ENCODE measurements at regions of chr1 and their contacts with region 1.

Region 1: GRCh38 chr1:184386312-184387068 is at the start of gene C1orf21:
- DNase-seq: peak; percentile 92 to 95
- ATAC-seq: peak; percentile 84 to 87 (median 86)
- H3K4me3 ChIP-seq: peak within 1 kb of the TSS; percentile 91
- H3K27ac ChIP-seq: peak within 1 kb of the TSS; percentile 96
- H3K4me1 ChIP-seq: peaks cover 29% of the 10 kb centered on the region
- H3K27me3 ChIP-seq: no peaks in the 10 kb centered on the region
- CTCF ChIP-seq: no peak
- total RNA-seq, gene C1orf21: 103 to 184 (median 149) TPM

Region 2: GRCh38 chr1:184270556-184270955 is 115.9 kb before region 1 on chr1:
- intact Hi-C with region 1: no loop called
- DNase-seq: no peak
- ATAC-seq: no peak
- H3K4me3 ChIP-seq: no peak overlapping the region
- H3K27ac ChIP-seq: no peak overlapping the region
- H3K4me1 ChIP-seq: no peaks in the 10 kb centered on the region
- H3K27me3 ChIP-seq: no peaks in the 10 kb centered on the region
- CTCF ChIP-seq: no peak

Region 3: DNA sequence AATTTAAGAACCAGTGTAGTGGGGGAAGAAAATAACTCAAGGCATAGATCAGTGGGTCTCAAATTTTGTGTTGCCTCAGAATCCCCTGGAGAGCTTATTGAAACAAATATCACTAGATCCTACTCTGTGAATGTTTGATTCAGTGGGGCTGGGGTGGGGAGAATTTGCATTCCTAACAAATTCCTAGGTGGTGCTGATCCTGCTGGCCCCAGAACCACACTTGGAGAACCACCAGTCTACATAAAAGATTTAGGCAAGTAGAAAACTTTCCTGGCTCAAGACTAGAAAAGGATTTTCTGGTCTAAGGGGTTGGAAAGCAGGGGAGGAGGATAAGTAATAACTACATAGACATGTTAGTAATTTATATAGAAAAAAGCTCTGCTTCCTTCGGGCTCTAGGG is 33.7 kb before region 1 on chr1:
- intact Hi-C with region 1: no loop called
- DNase-seq: no peak
- ATAC-seq: no peak
- H3K4me3 ChIP-seq: no peak overlapping the region
- H3K27ac ChIP-seq: no peak overlapping the region
- H3K4me1 ChIP-seq: peaks cover 25% of the 10 kb centered on the region
- H3K27me3 ChIP-seq: no peaks in the 10 kb centered on the region
- CTCF ChIP-seq: no peak

Region 4: DNA sequence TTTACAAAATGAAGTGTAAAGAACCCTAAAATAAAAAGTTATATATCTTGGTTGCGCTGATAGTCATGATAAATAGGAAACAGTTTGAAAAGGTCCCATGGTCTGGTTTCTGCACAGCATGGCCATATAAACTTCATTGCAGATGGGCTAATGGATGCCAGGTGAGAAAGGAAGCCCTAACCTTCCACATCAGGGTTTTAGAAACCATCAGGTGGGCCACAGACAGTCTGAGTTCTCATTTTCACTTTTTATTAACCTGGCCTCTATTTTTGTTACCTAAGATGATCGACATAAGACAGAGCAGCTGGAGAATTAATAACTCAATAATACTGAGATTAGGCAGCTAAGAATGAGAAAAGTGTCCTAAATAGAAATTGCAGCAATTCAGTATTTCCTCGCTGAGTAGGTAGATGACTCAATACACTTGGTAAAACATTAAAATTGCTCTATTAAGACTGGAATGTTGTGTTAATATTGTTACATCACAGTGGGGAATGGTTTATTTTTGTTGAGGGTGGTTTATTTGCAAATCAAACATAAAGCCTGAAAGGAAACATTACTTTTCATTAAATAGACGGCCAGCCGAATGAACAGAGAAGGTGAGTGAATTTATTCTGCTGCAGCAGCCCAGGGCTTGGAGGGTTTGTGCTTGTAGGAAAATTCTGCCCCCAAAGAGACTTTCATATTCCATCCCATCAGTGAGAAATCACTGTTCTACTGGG is 21.5 kb after region 1 on chr1:
- intact Hi-C with region 1: no loop called
- DNase-seq: no peak
- ATAC-seq: peak in 1 of 4 donors; percentile 16
- H3K4me3 ChIP-seq: no peak overlapping the region
- H3K27ac ChIP-seq: peak overlapping the region; percentile 43
- H3K4me1 ChIP-seq: peaks cover 72% of the 10 kb centered on the region
- H3K27me3 ChIP-seq: no peaks in the 10 kb centered on the region
- CTCF ChIP-seq: no peak

Region 5: DNA sequence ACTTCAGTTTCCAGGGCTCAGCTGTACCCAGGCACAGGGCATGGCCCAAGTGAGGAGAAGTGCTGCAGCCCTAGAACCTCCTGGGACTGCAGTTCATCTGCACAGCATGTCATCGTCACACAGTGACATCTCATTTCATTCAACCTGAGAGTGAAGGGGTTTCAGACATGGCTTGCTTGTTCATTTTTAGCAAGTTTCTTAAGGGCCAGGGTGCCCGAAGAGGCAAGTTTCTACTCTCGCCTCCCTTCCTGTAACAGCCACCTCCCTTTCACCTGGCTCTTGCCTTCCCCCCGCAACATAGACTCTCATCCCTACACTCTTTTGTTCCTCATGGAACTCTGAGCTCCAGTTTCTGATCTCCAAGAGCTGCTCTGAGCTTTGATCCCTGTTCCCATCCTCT is 108.4 kb after region 1 on chr1:
- intact Hi-C with region 1: loop called (anchors 5 kb)
- DNase-seq: no peak
- ATAC-seq: no peak
- H3K4me3 ChIP-seq: no peak overlapping the region
- H3K27ac ChIP-seq: peak overlapping the region; percentile 87
- H3K4me1 ChIP-seq: peaks cover 78% of the 10 kb centered on the region
- H3K27me3 ChIP-seq: no peaks in the 10 kb centered on the region
- CTCF ChIP-seq: no peak

Region 6: DNA sequence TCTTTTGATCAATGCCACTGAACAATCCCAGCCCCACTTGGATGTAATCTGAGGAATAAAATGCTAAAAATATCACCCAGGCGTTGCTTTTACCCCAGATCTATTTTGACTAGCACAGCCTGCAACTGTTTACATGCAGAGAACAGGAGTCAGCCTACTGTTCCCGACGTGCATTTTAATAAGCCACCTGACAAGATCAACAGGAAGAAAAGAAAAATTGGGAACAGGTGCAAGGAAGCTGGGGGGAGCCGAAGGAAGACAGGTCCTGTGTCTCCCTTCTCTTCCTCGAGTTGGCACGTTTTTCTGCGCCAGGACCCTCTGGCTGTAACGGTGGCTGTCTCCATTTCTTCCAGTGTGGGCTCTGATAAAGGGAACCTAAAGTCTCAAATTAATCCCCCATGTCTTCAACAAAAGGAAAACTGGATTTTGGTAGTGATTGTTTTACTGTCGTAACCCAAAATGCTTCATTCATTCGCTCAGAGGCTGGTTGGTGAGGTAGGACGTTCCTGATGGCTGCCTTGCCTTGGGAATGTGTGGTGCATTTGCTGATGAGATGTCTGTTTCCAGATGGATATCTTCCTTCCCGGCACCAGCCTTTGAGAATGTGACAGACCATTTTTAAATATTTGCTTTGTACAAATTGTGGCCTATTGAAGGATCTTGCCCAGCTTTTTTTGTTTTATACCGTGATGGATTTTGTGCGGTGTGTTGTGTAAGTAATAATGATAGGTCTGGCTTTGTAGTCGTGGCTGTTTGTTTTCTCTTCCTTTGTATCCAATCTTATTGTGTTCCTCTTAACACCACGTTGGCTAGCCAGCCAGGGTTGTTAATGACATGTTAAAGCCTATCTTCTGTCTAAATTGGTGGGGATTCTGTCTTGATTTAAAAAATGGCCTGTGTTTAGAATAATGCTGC is 117.8 kb after region 1 on chr1:
- intact Hi-C with region 1: loop called in 1 of 2 experiments (anchors 5 kb)
- DNase-seq: no peak
- ATAC-seq: peak; percentile 70 to 80 (median 75)
- H3K4me3 ChIP-seq: peak overlapping the region; percentile 58
- H3K27ac ChIP-seq: peak overlapping the region; percentile 88
- H3K4me1 ChIP-seq: peaks cover 75% of the 10 kb centered on the region
- H3K27me3 ChIP-seq: no peaks in the 10 kb centered on the region
- CTCF ChIP-seq: no peak

Region 7: DNA sequence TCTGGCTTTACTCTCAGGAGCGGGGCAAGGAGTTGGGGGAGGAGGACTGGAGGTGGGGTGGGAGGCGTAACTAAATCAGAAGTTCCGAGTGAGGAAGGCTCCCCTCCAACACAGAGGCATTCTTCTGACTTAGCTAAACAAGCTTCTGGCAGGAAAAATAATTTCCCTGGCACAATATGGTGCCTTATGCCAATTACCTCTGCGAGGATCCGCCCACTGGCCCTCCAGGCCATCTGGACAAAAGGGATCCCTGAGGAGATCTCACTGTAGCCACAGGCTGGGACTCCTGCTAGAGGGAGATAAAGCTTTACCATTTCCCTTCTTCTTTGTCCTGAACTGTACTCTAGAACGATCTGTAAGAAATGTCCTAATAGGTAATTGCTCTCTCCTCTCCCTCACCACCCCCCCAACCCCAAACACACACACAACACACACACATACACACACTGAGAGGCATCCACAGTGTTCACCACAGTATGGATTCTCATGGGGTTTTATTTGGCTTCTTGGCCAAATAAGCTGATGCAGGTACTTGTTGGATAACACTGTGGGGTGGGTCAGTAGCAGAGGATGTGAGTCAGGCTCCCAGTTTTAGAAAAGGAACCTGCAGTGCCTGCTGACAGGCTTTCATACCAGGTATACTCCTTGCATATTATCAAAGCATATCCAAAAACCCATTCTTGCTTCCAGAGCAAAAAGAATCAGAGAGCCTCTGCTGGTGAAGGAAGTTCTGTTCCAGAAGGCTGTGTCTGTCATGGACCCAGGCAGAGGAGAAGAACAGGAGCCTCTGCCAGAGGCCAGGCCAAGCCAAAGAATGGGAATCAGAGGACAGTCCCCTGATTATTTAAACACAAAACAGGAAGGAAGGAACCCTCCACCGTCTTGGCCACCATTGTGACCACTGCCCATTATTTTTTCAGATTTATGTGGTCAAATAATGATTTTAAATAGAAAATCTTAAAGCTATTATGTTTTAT is 169.5 kb after region 1 on chr1:
- intact Hi-C with region 1: loop called (anchors 2 to 5 kb)
- DNase-seq: no peak
- ATAC-seq: peak; percentile 81 to 85 (median 83)
- H3K4me3 ChIP-seq: no peak overlapping the region
- H3K27ac ChIP-seq: peak overlapping the region; percentile 93
- H3K4me1 ChIP-seq: peaks cover 37% of the 10 kb centered on the region
- H3K27me3 ChIP-seq: no peaks in the 10 kb centered on the region
- CTCF ChIP-seq: no peak

Region 8: DNA sequence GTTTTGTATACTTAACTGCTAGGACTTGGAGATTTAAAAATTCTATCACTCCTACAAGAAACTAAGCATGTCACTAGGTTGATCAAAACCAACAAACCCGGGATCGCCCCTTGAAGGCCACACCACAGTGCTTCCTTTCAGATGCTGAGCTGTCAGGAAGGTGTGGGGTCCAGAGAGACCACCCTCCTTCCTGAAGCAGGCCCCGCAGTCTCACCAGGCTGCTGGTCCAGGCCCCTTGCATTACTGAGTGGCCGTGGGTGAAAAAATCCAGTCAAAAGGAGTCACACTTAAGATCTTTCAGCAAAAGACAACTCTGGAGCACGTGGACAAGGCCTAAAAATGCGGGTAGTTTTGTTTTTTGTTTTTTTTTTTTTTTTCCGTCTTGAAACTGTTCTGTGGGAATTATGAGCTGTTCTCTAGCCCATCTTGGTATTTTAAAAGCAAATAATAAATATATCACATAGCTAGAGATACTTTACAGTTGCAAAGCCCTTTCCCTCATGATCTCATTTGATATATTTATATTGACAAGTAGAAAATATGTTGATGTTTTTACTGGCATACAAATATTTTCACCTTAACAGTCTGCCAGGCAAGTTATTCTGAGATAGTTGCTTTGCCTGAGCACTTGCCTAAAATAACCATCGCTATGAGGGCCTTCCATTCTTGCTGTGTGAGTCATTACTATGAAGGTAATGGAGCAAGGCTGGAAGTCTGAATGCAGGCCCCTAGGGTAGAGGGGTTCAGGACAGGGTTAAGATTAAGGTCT is 441.3 kb after region 1 on chr1:
- intact Hi-C with region 1: no loop called
- DNase-seq: no peak
- ATAC-seq: peak; percentile 87 to 88 (median 88)
- H3K4me3 ChIP-seq: no peak overlapping the region
- H3K27ac ChIP-seq: peak overlapping the region; percentile 92
- H3K4me1 ChIP-seq: peaks cover 69% of the 10 kb centered on the region
- H3K27me3 ChIP-seq: no peaks in the 10 kb centered on the region
- CTCF ChIP-seq: no peak